ENCODE measurements at regions of chr1 and their contacts with region 1.

Region 1: DNA sequence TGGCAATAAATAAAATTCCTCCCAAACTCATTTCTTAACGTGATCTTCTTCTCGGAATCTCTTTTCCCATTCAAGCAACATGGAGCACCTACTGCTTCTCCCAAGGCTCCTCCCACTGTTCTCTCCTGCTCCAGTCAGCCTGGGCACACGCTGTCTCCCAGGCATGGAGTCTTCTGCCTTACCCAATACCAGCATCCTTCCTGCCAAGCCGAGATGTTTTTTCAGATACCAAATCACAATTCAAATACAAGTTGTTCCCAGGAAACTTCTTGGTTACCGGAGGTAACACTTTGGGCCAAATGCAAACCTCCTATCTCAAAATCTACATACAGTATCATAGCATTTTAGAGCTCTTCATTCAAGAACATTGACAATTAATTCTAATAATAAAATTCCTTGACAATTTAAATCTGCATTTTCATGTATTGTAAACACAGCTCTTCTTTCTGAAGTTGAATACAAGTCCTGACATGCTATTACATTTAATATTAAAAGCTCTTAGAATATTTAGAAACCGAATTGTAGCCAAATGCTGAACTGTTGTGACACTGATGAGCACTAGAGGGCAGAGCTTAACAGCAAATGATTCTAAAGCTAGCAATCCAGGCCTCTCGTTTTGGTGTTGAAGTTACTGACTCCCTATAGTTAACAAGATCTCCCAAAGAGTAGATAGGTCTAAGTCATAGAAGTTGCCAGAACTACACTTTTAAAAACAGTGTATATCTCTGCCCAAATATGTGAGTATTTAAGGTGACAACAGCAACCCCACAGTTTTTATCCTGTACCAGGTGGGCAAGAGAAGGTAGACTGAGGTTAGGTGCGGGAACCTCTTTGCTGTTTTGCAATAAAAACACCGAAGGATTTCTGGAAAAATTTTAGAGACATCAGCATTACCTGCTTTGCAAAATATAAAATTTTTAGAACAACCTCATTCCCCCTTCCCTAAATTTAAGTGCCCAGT is 52.3 kb downstream of the BCAR3 start:
- DNase-seq: no peak
- ATAC-seq: peak; percentile 76
- H3K4me3 Mint-ChIP-seq: no peak overlapping the region
- H3K27ac Mint-ChIP-seq: peak overlapping the region; percentile 47; the same call in 1 of the 2 replicates
- H3K4me1 Mint-ChIP-seq: peaks cover 7% of the 10 kb centered on the region; the same call in 1 of the 2 replicates
- H3K27me3 Mint-ChIP-seq: no peaks in the 10 kb centered on the region
- CTCF ChIP-seq: peak; percentile 62

Region 2: GRCh38 chr1:93304716-93305138 is 324.7 kb before region 1 on chr1:
- CTCF ChIA-PET with region 1: interaction called, 10 read pairs
- POLR2A ChIA-PET with region 1: no interaction called
- DNase-seq: peak; percentile 26
- ATAC-seq: peak; percentile 52; the same call in 1 of the 2 replicates
- H3K4me3 Mint-ChIP-seq: no peak overlapping the region
- H3K27ac Mint-ChIP-seq: no peak overlapping the region; the same call in 1 of the 2 replicates
- H3K4me1 Mint-ChIP-seq: peaks cover 26% of the 10 kb centered on the region
- H3K27me3 Mint-ChIP-seq: no peaks in the 10 kb centered on the region
- CTCF ChIP-seq: peak; percentile 86

Region 3: DNA sequence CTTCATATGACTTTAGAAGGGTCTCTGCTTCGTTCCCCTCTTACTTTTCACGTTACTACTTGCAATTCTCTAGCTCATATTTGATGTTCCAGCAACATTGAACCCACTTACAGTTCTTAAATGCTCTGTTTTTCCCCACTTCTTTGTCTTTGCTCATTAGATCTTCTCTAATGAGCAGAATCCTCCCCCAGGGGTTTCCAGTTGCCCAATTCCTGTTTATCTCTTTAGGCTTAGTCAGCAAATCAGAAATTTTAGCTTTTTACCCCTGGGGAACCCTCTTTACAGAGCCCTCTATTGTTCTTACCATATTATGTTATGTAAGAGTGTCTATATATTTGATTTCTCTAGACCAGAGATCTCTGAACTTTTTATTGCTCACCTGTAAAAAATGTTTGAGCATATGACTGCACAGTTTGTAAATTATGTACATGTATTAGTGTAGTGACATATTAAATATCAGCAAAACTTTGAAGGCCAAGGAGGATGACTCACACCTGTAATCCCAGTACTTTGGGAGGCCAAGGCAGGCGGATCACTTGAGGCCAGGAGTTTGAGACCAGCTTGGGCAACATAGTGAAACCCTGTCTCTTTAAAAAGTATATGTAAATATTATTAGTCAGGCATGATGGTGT is 110.1 kb before region 1 on chr1:
- CTCF ChIA-PET with region 1: no interaction called
- POLR2A ChIA-PET with region 1: no interaction called
- DNase-seq: no peak
- ATAC-seq: no peak
- H3K4me3 Mint-ChIP-seq: no peak overlapping the region
- H3K27ac Mint-ChIP-seq: peak overlapping the region; percentile 31; the same call in 1 of the 2 replicates
- H3K4me1 Mint-ChIP-seq: peaks cover 20% of the 10 kb centered on the region
- H3K27me3 Mint-ChIP-seq: no peaks in the 10 kb centered on the region
- CTCF ChIP-seq: no peak

Region 4: GRCh38 chr1:93615582-93616150 is 13.7 kb before region 1 on chr1:
- CTCF ChIA-PET with region 1: interaction called, 34 read pairs
- POLR2A ChIA-PET with region 1: no interaction called
- DNase-seq: no peak
- ATAC-seq: peak; percentile 23
- H3K4me3 Mint-ChIP-seq: peak overlapping the region; percentile 24; the same call in 1 of the 2 replicates
- H3K27ac Mint-ChIP-seq: peak overlapping the region; percentile 71
- H3K4me1 Mint-ChIP-seq: peaks cover 66% of the 10 kb centered on the region
- H3K27me3 Mint-ChIP-seq: no peaks in the 10 kb centered on the region
- CTCF ChIP-seq: no peak

Region 5: DNA sequence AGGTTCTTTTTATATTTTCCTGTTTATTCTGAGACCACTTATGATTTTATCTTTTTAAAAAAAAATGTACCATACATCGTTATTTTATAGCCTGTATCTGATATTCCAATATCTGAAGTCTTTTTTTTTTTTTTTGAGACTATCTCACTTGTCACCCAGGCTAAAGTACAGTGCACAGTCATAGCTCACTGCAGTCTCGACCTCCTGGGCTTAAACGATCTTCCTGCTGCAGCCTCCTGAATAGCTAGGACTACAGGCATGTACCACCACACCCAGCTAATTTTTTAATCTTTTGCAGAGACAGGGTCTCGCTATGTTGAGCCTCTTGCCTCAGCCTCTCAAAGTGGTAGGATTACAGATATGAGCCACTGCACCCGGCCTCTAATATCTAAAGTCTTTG is 27.1 kb after region 1 on chr1:
- CTCF ChIA-PET with region 1: no interaction called
- POLR2A ChIA-PET with region 1: no interaction called
- DNase-seq: no peak
- ATAC-seq: no peak
- H3K4me3 Mint-ChIP-seq: no peak overlapping the region
- H3K27ac Mint-ChIP-seq: no peak overlapping the region
- H3K4me1 Mint-ChIP-seq: no peaks in the 10 kb centered on the region; the same call in 1 of the 2 replicates
- H3K27me3 Mint-ChIP-seq: no peaks in the 10 kb centered on the region
- CTCF ChIP-seq: no peak

Region 6: GRCh38 chr1:93680757-93681550 is 51.6 kb after region 1 on chr1:
- CTCF ChIA-PET with region 1: interaction called, 18 read pairs
- POLR2A ChIA-PET with region 1: no interaction called
- DNase-seq: peak; percentile 89
- ATAC-seq: peak; percentile 90
- H3K4me3 Mint-ChIP-seq: peak overlapping the region; percentile 94
- H3K27ac Mint-ChIP-seq: peak overlapping the region; percentile 95
- H3K4me1 Mint-ChIP-seq: peaks cover 36% of the 10 kb centered on the region
- H3K27me3 Mint-ChIP-seq: peaks cover 32% of the 10 kb centered on the region
- CTCF ChIP-seq: no peak

Region 7: DNA sequence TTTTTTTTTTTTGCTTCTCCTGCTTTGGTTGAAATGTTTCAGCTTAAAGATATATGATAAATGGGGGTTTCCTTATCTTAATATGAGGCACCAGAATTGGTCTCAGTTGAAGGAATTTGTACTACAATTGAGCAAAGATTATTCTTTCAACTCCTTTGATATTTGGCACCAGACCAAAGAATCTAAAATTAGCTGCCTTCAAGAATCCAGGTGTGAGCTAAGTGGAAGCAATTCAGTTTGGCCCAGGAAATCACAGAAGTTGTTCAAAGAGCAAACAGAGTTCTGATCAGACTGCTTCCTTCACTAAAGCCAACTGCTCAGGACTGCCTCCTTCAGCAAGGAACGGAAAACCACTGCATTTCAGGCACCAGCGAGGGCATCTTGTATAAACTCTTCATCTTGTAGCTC is 120.5 kb after region 1 on chr1:
- CTCF ChIA-PET with region 1: interaction called, 18 read pairs
- POLR2A ChIA-PET with region 1: no interaction called
- DNase-seq: peak; percentile 41
- ATAC-seq: peak; percentile 73
- H3K4me3 Mint-ChIP-seq: no peak overlapping the region
- H3K27ac Mint-ChIP-seq: peak overlapping the region; percentile 26
- H3K4me1 Mint-ChIP-seq: peaks cover 4% of the 10 kb centered on the region
- H3K27me3 Mint-ChIP-seq: peaks cover 5% of the 10 kb centered on the region; the same call in 1 of the 2 replicates
- CTCF ChIP-seq: no peak

Region 8: GRCh38 chr1:93827633-93828366 is 198.4 kb after region 1 on chr1:
- CTCF ChIA-PET with region 1: interaction called, 33 read pairs
- POLR2A ChIA-PET with region 1: no interaction called
- DNase-seq: no peak
- ATAC-seq: no peak
- H3K4me3 Mint-ChIP-seq: no peak overlapping the region
- H3K27ac Mint-ChIP-seq: peak overlapping the region; percentile 28; the same call in 1 of the 2 replicates
- H3K4me1 Mint-ChIP-seq: peaks cover 57% of the 10 kb centered on the region
- H3K27me3 Mint-ChIP-seq: peaks cover 13% of the 10 kb centered on the region
- CTCF ChIP-seq: no peak